T-cell (primary cell): ENCODE measurements at regions of chr4 and their contacts with region 1.

Region 1: GRCh38 chr4:176792671-176793605 is at the start of gene VEGFC:
- DNase-seq: no peak
- ATAC-seq: peak in 1 of 4 experiments; percentile 35
- H3K4me3 ChIP-seq: peak within 1 kb of the TSS in 1 of 2 donors; percentile 55
- H3K4me3 Mint-ChIP-seq: peak within 1 kb of the TSS; percentile 4 to 68 (median 25)
- H3K27ac ChIP-seq: no peak within 1 kb of the TSS
- H3K27ac Mint-ChIP-seq: no peak within 1 kb of the TSS
- H3K4me1 ChIP-seq: no peaks in the 10 kb centered on the region
- H3K4me1 Mint-ChIP-seq: peaks cover 8 to 11% (median 9%) of the 10 kb centered on the region in 3 donors
- H3K27me3 ChIP-seq: peaks cover 8 to 16% of the 10 kb centered on the region in 2 experiments
- H3K27me3 Mint-ChIP-seq: peaks cover 35 to 66% of the 10 kb centered on the region in 2 donors
- total RNA-seq, gene VEGFC: 0.13 to 0.18 TPM in 2 of 5 donors, not detected in the others

Region 2: DNA sequence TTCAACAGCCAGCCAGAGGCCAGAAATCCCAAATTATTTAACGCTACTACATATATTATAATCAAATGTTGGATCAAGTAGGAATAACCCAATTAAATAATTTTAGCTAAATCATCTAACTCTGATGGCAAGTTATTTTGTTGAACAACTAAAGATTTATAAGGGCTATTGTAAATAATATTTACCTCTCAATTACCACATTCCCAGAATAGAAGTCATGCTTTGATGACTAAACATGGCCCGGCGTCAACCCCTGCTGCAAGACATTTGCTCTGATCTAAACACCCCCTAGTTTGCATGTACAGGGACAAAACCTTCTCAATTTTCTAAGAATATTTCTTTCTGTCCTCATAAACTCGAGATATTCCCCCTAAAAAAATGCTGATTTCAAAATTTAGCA is 14.4 kb before region 1 on chr4:
- CTCF ChIA-PET with region 1: interaction called in 1 of 2 experiments, 10 read pairs
- POLR2A ChIA-PET with region 1: no interaction called
- DNase-seq: no peak
- ATAC-seq: no peak
- H3K4me3 ChIP-seq: no peak overlapping the region
- H3K4me3 Mint-ChIP-seq: no peak overlapping the region
- H3K27ac ChIP-seq: no peak overlapping the region
- H3K27ac Mint-ChIP-seq: no peak overlapping the region
- H3K4me1 ChIP-seq: no peaks in the 10 kb centered on the region
- H3K4me1 Mint-ChIP-seq: no peaks in the 10 kb centered on the region
- H3K27me3 ChIP-seq: no peaks in the 10 kb centered on the region
- H3K27me3 Mint-ChIP-seq: peaks cover 0 to 1% of the 10 kb centered on the region in 2 donors

Region 3: DNA sequence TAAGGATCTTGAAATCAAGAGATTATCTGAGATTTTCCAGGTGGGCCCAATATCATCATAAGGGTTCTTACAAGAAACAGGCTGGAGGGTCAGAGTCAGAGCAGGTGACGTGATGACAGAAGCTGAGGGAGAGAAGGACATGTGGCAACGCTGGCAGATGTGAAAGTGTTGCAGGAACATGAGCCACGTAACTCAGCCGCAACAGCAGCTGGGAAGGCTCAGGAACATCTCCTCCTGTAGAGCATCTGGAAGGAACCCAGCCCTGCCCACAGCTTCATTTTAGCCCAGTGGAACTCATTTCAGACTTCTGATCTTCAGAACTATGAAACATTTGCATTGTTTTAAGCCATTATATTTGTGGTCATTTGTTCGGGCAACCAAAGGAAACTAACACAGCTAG is 156.1 kb after region 1 on chr4:
- CTCF ChIA-PET with region 1: no interaction called
- POLR2A ChIA-PET with region 1: no interaction called
- DNase-seq: no peak
- ATAC-seq: no peak
- H3K4me3 ChIP-seq: no peak overlapping the region
- H3K4me3 Mint-ChIP-seq: no peak overlapping the region
- H3K27ac ChIP-seq: no peak overlapping the region
- H3K27ac Mint-ChIP-seq: no peak overlapping the region
- H3K4me1 ChIP-seq: no peaks in the 10 kb centered on the region
- H3K4me1 Mint-ChIP-seq: no peaks in the 10 kb centered on the region
- H3K27me3 ChIP-seq: no peaks in the 10 kb centered on the region
- H3K27me3 Mint-ChIP-seq: no peaks in the 10 kb centered on the region

Region 4: DNA sequence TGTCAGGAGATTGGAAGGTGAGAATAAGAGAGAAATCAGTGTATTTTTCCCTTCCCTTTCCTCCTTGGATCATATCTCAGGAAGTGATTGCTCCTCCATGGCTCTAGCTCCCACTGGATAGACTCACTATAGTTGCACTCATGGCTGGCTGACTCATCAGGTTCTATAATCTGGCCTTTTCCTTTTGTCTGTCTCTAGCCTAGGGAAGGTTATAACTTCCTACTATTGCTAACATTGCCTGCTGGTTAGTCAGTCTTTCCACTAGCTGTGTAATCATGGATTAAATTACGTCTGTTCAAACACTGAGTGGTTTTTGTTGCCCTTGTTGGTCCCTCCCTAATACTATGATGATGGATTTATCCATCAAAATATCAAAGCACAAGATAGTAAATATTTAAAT is 195.3 kb after region 1 on chr4:
- CTCF ChIA-PET with region 1: no interaction called
- POLR2A ChIA-PET with region 1: no interaction called
- DNase-seq: no peak
- ATAC-seq: no peak
- H3K4me3 ChIP-seq: no peak overlapping the region
- H3K4me3 Mint-ChIP-seq: no peak overlapping the region
- H3K27ac ChIP-seq: no peak overlapping the region
- H3K27ac Mint-ChIP-seq: no peak overlapping the region
- H3K4me1 ChIP-seq: no peaks in the 10 kb centered on the region
- H3K4me1 Mint-ChIP-seq: no peaks in the 10 kb centered on the region
- H3K27me3 ChIP-seq: no peaks in the 10 kb centered on the region
- H3K27me3 Mint-ChIP-seq: peaks cover 0 to 4% of the 10 kb centered on the region in 2 donors